Heart left ventricle (tissue), 16 donors: ENCODE measurements at regions of chr2 and their contacts with region 1.

Region 1: DNA sequence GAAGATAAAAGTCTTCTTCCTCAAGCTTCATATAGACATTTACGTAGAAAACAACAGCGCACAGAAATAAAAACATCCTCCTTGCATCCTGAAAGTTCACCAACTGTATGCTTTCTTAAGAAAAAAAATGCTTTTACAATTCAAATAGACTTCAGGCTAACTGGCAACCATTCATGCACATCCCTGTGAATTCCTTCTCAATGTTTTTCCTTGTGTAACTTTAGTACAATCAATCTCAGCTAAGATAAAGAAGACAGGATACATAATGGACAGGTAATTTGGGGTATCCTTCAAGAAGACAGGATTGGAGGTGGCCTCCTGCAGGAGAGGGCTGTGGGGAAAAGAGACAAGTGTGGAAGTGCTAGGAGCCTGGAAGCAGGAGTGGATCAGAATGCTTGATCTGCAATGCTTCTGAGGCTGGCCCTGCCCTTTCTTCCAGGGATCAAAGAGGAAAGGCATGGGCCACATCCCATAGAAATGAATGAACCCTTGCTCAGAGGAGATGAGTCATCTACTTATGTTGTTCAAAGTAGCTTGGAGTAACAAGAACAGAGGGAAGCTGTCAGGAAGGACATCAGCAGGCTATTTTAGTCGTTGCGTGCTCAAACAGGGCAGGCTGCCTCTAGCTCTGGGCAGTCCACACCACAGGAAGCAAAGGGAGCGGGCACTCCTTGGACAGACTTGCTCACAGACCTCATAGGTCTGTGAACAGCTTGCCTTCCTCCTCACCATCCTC is 126.6 kb downstream of the TMEM131 start:
- DNase-seq: peak; percentile 33 to 81 (median 63)
- ATAC-seq: peak; percentile 92 to 96 (median 94)
- H3K4me3 ChIP-seq: no peak overlapping the region
- H3K27ac ChIP-seq: peak overlapping the region; percentile 75 to 86 (median 81)
- H3K4me1 ChIP-seq: peaks cover 0 to 56% (median 33%) of the 10 kb centered on the region in 12 donors
- H3K27me3 ChIP-seq: no peaks in the 10 kb centered on the region
- CTCF ChIP-seq: no peak
- POLR2A ChIP-seq: peak in 1 of 2 donors; percentile 39

Region 2: DNA sequence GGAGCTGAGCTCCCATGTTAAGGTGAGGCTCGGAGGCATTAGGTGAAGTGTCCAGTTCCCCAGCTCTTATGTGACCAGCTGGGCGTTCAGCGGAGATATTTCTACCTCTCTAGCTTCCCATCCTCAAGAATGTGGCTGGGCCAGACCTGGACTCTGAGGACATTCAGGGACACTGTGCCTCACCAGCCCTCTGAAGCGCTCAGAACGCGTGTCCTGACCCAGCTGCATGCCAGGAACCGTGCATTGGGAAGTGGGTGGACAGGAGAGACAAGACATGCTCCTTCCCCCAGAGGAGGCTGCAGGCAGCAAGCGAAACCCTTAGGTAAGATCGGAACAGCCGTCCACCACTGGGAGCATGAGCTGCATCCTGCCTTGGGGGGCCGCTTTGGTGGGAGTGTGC is 1796.4 kb before region 1 on chr2:
- intact Hi-C with region 1: no loop called
- DNase-seq: no peak
- ATAC-seq: no peak
- H3K4me3 ChIP-seq: no peak overlapping the region
- H3K27ac ChIP-seq: no peak overlapping the region
- H3K4me1 ChIP-seq: peaks cover 0 to 12% (median 0%) of the 10 kb centered on the region in 12 donors
- H3K27me3 ChIP-seq: no peaks in the 10 kb centered on the region
- CTCF ChIP-seq: no peak
- POLR2A ChIP-seq: no peak

Region 3: GRCh38 chr2:97919858-97920257 is 50.7 kb after region 1 on chr2:
- intact Hi-C with region 1: no loop called
- DNase-seq: no peak
- ATAC-seq: no peak
- H3K4me3 ChIP-seq: no peak overlapping the region
- H3K27ac ChIP-seq: no peak overlapping the region
- H3K4me1 ChIP-seq: peaks cover 0 to 12% (median 2%) of the 10 kb centered on the region in 12 donors
- H3K27me3 ChIP-seq: no peaks in the 10 kb centered on the region
- CTCF ChIP-seq: no peak
- POLR2A ChIP-seq: no peak

Region 4: DNA sequence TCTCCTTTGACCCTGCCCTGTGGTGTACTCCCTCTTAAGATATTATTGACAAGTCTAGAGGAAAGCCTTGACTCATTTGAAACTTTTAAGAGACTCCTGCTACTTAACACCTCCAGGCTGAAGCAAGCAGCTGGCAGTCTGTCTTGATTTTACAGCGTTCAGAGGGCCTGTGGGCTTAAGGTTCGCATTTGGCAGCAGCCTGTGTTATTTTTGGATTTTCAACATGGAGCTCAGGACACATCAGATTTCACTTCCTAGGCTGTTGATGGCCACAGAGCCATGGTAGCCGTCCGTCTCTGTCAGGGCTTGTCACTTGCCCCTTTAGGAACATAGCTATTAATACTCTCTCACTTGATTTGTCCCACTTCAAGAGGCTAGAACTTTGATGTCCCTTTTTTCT is 291.4 kb after region 1 on chr2:
- intact Hi-C with region 1: loop called in 1 of 10 experiments (anchors 5 kb)
- DNase-seq: peak in 4 of 5 donors; percentile 56 to 77 (median 66)
- ATAC-seq: peak; percentile 60 to 75 (median 66)
- H3K4me3 ChIP-seq: no peak overlapping the region
- H3K27ac ChIP-seq: peak overlapping the region; percentile 76 to 96 (median 92)
- H3K4me1 ChIP-seq: peaks cover 3 to 81% (median 50%) of the 10 kb centered on the region in 12 donors
- H3K27me3 ChIP-seq: no peaks in the 10 kb centered on the region
- CTCF ChIP-seq: no peak
- POLR2A ChIP-seq: peak in 1 of 2 donors; percentile 29